Pancreas (tissue), 10 donors: ENCODE measurements at regions of chr12 and their contacts with region 1.

Region 1: GRCh38 chr12:103571286-103571685 is 15.8 kb upstream of the STAB2 start:
- DNase-seq: peak in 3 of 6 donors; percentile 22 to 57 (median 55)
- ATAC-seq: peak; percentile 22 to 51 (median 40)
- H3K4me3 ChIP-seq: peak overlapping the region in 1 of 4 donors; percentile 17
- H3K27ac ChIP-seq: no peak overlapping the region
- H3K4me1 ChIP-seq: peaks cover 0 to 3% (median 0%) of the 10 kb centered on the region in 3 donors
- H3K27me3 ChIP-seq: peaks cover 0 to 10% (median 4%) of the 10 kb centered on the region in 4 donors
- CTCF ChIP-seq: no peak

Region 2: DNA sequence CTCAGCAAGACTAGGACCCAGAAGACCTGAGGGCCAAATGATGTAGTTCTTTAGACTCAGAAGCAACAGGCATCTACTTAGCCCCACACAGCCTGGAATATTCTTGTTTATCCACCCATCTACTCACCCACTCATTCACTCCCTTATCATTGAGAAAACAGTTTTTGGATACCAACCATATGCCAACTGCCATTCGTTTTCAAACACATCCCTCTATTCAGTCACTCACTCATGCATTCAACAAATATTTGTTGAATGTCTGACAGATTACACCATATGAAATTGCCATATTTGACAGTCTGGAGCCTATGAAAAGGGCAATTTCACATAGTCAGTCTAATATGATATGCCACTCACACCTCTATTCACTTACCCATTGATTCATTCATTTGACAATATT is 166.6 kb after region 1 on chr12:
- intact Hi-C with region 1: no loop called
- DNase-seq: no peak
- ATAC-seq: no peak
- H3K4me3 ChIP-seq: no peak overlapping the region
- H3K27ac ChIP-seq: no peak overlapping the region
- H3K4me1 ChIP-seq: no peaks in the 10 kb centered on the region
- H3K27me3 ChIP-seq: no peaks in the 10 kb centered on the region
- CTCF ChIP-seq: no peak

Region 3: GRCh38 chr12:103860903-103861763 is 289.8 kb after region 1 on chr12:
- intact Hi-C with region 1: loop called in 1 of 3 experiments (anchors 10 kb)
- DNase-seq: no peak
- ATAC-seq: no peak
- H3K4me3 ChIP-seq: no peak overlapping the region
- H3K27ac ChIP-seq: no peak overlapping the region
- H3K4me1 ChIP-seq: no peaks in the 10 kb centered on the region
- H3K27me3 ChIP-seq: no peaks in the 10 kb centered on the region
- CTCF ChIP-seq: no peak